BJ (cell line): ENCODE measurements at regions of chr1 and their contacts with region 1.

Region 1: DNA sequence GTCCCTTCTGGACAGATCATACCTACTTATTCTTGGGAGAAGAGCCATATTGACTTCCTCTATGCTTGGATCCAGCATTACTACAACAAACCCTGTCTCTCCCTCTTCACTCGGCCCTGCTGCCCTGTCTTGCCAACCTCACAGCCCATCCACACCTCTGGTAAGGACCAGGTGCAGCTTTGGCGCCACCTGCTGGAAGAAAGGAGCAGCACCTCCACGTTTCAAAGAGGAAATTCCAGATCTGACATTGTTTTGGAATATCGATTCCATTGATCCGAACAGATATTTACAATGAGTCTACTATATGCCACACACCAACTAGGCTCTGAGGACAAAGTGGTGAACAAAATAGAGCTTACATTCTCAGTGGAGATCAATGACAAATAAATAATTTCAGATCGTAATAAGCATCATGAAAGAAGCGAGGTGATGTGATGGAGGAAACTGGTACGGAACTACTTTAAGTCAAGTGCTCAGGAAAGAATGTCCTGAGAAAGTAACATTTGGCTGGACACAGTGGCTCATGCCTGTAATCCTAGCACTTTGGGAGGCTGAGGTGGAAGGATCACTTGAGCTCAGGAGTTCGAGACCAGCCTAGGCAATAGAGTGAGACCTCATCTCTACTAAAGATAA is 18.7 kb downstream of the MFSD2A start:
- DNase-seq: no peak
- H3K4me3 ChIP-seq: no peak overlapping the region
- H3K27me3 ChIP-seq: no peaks in the 10 kb centered on the region
- CTCF ChIP-seq: peak; percentile 98

Region 2: DNA sequence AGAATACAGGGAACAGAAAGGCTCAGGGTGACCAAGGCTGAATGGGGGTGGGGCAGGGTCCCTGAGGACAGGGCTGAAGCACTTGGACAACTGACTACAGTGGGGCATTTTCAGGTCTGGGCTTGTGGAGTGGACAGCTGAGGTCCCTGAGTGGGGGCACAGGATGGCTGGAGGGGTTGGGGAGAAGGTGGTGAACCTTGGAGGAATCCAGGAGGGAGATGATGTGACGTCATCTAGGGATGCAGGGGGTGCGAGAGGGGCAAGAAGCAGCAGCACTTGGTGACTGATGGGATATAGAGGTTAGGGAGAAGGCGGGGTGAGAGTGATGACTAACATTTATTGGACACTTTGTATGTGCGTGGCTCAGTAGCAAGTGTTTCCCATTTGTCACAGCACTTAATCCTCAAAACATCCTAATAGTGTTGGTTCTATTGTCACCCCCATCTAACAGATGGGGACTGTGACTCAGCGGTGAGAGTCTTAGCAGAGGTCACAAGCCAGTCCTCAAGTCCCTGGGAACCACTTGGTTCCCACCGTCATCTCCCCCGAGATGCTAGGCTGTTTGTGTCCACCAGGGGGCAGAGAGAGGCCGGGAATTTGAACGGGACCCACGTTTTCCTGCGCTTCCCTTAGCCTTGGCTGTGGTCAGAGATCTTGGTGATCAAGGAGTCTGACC is 157.1 kb before region 1 on chr1:
- CTCF ChIA-PET with region 1: interaction called, 34 read pairs
- POLR2A ChIA-PET with region 1: no interaction called
- DNase-seq: peak; percentile 65
- H3K4me3 ChIP-seq: no peak overlapping the region
- H3K27me3 ChIP-seq: peaks cover 3% of the 10 kb centered on the region
- CTCF ChIP-seq: peak; percentile 78

Region 3: GRCh38 chr1:39926343-39926793 is 47.3 kb before region 1 on chr1:
- CTCF ChIA-PET with region 1: interaction called, 228 read pairs
- POLR2A ChIA-PET with region 1: no interaction called
- DNase-seq: no peak
- H3K4me3 ChIP-seq: no peak overlapping the region
- H3K27me3 ChIP-seq: peaks cover 2% of the 10 kb centered on the region
- CTCF ChIP-seq: no peak

Region 4: DNA sequence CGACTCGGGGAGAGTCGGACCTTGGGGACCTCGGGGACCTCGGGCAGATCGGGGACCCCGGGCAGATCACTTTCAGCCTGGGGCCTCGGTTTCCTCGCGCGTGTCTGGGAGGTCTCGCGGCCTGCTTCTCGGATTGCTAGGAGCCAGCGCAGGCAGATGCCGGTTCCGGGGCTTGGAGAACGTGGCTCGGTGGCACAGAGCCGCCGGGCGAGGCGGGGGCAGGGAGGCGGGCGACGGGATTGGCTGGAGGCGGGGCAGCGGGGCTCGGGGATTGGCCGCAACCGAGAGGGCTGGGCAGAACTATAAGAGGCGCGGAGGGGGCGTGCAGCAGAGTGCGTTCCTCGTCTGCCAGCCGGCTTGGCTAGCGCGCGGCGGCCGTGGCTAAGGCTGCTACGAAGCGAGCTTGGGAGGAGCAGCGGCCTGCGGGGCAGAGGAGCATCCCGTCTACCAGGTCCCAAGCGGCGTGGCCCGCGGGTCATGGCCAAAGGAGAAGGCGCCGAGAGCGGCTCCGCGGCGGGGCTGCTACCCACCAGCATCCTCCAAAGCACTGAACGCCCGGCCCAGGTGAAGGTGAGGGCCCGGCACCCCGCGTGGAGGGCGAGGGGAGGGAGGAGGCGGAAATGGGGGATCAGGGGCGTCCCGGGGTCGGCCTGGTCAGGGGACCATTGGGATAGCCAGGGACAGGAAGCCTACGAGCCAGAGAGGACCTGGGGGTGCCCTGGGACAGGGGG is 18.6 kb before region 1 on chr1 and contains the start of gene MFSD2A:
- CTCF ChIA-PET with region 1: interaction called, 47 read pairs
- POLR2A ChIA-PET with region 1: no interaction called
- DNase-seq: peak; percentile 52
- H3K4me3 ChIP-seq: peak within 1 kb of the TSS; percentile 52
- H3K27me3 ChIP-seq: no peaks in the 10 kb centered on the region
- CTCF ChIP-seq: no peak
- polyA plus RNA-seq, gene MFSD2A: 0.94 and 2.0 TPM in 2 replicates

Region 5: DNA sequence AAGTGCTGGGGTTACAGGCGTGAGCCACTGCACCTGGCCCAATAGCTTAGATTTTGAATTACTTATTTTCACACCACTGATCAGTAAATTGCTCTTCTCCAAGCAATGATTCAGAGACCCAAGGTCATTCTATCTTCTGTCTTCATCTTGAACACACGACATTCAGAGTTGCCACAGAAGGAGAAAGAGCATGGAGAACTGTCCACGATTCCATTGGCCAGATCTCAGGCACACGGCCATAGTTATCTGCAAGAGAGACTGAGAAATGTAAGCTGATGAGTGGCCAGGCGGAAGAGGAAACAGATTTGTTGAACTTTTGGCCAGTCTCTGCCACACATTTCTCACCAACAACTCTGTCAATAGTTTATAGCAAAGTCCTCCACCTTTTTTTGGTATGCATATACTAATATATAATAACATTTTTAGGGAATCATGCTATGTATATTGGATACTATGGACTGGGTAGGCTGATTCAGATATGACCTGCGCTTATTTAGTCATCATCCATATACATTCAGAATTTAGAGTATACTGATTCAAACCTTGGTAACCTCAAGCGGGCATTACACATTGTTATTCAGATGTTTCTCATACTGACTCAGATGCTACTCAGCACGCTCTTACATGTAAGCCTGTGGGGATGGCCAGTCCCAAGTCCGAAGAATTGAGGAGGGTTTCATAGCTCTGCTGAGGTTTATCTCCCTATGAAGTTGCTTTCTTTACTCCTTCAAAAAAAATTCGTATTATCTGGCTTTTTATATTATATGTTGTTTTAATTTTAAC is 41.4 kb after region 1 on chr1:
- CTCF ChIA-PET with region 1: interaction called, 11 read pairs
- POLR2A ChIA-PET with region 1: no interaction called
- DNase-seq: peak; percentile 57
- H3K4me3 ChIP-seq: no peak overlapping the region
- H3K27me3 ChIP-seq: no peaks in the 10 kb centered on the region
- CTCF ChIP-seq: no peak

Region 6: GRCh38 chr1:40032240-40032891 is 58.7 kb after region 1 on chr1:
- CTCF ChIA-PET with region 1: interaction called, 21 read pairs
- POLR2A ChIA-PET with region 1: no interaction called
- DNase-seq: no peak
- H3K4me3 ChIP-seq: no peak overlapping the region
- H3K27me3 ChIP-seq: no peaks in the 10 kb centered on the region; the same call in 1 of the 2 replicates
- CTCF ChIP-seq: peak; percentile 64